ENCODE measurements at regions of chr20 and their contacts with region 1.

Region 1: GRCh38 chr20:51541189-51542032 is 1.1 kb downstream of the NFATC2 start:
- DNase-seq: peak; percentile 56
- H3K4me3 Mint-ChIP-seq: peak overlapping the region; percentile 93
- H3K27ac Mint-ChIP-seq: peak overlapping the region; percentile 73
- H3K4me1 Mint-ChIP-seq: peaks cover 22% of the 10 kb centered on the region
- H3K27me3 Mint-ChIP-seq: peaks cover 29% of the 10 kb centered on the region
- CTCF ChIP-seq: no peak

Region 2: GRCh38 chr20:51385646-51386530 is 155.5 kb before region 1 on chr20:
- CTCF ChIA-PET with region 1: no interaction called
- intact Hi-C with region 1: loop called (anchors 2 kb)
- DNase-seq: peak; percentile 51
- H3K4me3 Mint-ChIP-seq: no peak overlapping the region
- H3K27ac Mint-ChIP-seq: no peak overlapping the region
- H3K4me1 Mint-ChIP-seq: peaks cover 26% of the 10 kb centered on the region
- H3K27me3 Mint-ChIP-seq: peaks cover 32% of the 10 kb centered on the region
- CTCF ChIP-seq: peak; percentile 67

Region 3: DNA sequence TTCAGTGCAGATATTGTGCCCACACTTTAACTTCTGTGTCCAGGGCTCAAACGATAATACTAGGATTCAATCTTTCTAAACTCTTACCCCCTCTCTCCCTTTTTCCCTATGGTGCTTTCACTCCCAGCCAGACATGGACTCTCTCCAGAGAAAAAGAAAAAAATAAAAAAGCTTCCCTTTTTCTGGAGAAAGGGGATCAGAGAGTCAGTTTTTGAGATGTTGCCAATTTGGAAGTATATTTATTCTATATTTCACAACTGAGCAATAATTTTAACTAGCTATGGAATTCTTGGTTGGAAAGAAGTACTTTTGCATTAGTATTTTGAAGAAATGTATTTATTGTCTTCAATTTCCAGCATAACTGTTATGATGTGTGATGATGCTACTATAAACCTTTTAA is 722.3 kb after region 1 on chr20:
- CTCF ChIA-PET with region 1: no interaction called
- intact Hi-C with region 1: no loop called
- DNase-seq: no peak
- H3K4me3 Mint-ChIP-seq: no peak overlapping the region
- H3K27ac Mint-ChIP-seq: no peak overlapping the region
- H3K4me1 Mint-ChIP-seq: no peaks in the 10 kb centered on the region
- H3K27me3 Mint-ChIP-seq: peaks cover 86% of the 10 kb centered on the region
- CTCF ChIP-seq: no peak

Measured in Calu3 (cell line).